ENCODE measurements at regions of chr17 and their contacts with region 1.

Region 1: DNA sequence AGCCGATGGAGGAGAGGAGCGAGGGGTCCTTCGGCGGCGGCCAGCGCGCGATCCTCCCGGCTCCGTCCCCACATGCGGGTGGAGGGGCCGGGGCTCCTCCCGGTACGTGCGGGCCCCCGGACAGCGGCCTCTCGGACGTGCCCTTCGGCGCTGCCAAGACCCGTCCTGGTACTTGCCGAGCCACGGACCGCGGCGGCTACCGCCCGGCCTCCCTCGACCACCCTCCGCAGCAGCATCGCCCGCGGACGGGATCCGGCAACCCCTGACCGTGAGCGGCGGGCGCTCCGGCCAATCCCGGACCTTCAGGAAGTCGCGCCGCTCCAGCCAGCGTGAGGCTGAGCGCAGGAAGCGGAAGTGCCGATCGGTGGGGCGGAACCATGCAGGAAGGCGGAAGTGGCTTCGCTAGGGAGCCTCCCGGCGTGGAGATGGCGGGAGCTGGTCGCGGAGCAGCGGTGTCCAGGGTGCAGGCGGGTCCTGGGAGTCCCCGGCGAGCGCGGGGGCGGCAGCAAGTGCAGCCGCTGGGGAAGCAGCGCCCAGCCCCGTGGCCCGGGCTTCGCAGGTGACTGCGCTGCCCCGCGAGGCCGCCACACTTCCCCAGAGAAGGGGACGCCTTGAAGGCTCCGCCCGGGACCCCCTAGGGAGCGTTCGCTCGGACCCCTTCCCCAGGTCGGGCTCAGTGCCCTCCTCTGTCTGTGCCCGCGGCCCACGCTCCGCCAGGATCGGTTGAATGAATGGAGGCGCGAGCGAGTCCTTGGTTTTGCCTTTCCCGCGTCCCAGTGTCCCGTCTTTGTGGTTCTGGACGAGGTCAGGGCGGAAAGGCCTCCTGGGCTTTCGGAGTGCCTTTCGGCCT is at the starts of genes CCDC137 and OXLD1:
- DNase-seq: peak; percentile 83 to 97 (median 92)
- ATAC-seq: peak; percentile 91 to 94 (median 93)
- H3K4me3 ChIP-seq: peak within 1 kb of the TSS; percentile 69 to 83
- H3K4me3 Mint-ChIP-seq: peak within 1 kb of the TSS; percentile 81 to 90 (median 85)
- H3K27ac ChIP-seq: peak within 1 kb of the TSS; percentile 61
- H3K27ac Mint-ChIP-seq: peak within 1 kb of the TSS; percentile 90 to 92
- H3K4me1 ChIP-seq: peaks cover 33 to 62% of the 10 kb centered on the region in 2 experiments
- H3K4me1 Mint-ChIP-seq: peaks cover 38 to 52% (median 41%) of the 10 kb centered on the region in 3 donors
- H3K27me3 ChIP-seq: no peaks in the 10 kb centered on the region
- H3K27me3 Mint-ChIP-seq: no peaks in the 10 kb centered on the region
- total RNA-seq, gene CCDC137: 15.9 to 33.9 (median 30.0) TPM
- total RNA-seq, gene OXLD1: 34.1 to 93.3 (median 68.1) TPM

Region 2: GRCh38 chr17:81508639-81509206 is 157.8 kb before region 1 on chr17:
- CTCF ChIA-PET with region 1: no interaction called
- POLR2A ChIA-PET with region 1: interaction called in 1 of 2 experiments, 13 read pairs
- DNase-seq: no peak
- ATAC-seq: no peak
- H3K4me3 ChIP-seq: peak overlapping the region; percentile 10 to 96
- H3K4me3 Mint-ChIP-seq: peak overlapping the region; percentile 95 to 98 (median 98)
- H3K27ac ChIP-seq: peak overlapping the region; percentile 56
- H3K27ac Mint-ChIP-seq: peak overlapping the region; percentile 93 to 96
- H3K4me1 ChIP-seq: peaks cover 24 to 51% of the 10 kb centered on the region in 2 experiments
- H3K4me1 Mint-ChIP-seq: peaks cover 29 to 44% (median 43%) of the 10 kb centered on the region in 3 donors
- H3K27me3 ChIP-seq: no peaks in the 10 kb centered on the region
- H3K27me3 Mint-ChIP-seq: no peaks in the 10 kb centered on the region

Region 3: DNA sequence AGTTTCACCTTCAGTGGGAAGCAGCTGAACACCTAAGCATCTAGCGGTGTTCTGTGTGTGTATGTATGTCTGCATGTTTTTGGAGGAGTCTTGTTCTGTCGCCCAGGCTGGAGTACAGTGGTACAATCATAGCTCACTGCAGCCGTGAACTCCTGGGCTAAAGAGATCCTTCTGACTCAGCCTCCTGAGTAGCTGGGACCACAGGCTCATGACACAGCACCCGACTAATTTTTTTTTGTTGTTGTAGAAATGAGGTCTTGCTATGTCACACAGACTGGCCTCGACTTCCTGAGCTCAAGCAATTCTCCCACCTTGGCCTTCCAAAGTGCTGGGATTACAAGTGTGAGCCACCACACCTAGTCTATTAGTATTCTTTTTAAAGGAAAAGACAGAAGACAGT is 84.2 kb before region 1 on chr17:
- CTCF ChIA-PET with region 1: interaction called in 1 of 2 experiments, 11 read pairs
- POLR2A ChIA-PET with region 1: no interaction called
- DNase-seq: no peak
- ATAC-seq: no peak
- H3K4me3 ChIP-seq: no peak overlapping the region
- H3K4me3 Mint-ChIP-seq: no peak overlapping the region
- H3K27ac ChIP-seq: no peak overlapping the region
- H3K27ac Mint-ChIP-seq: no peak overlapping the region
- H3K4me1 ChIP-seq: no peaks in the 10 kb centered on the region
- H3K4me1 Mint-ChIP-seq: peaks cover 0 to 20% (median 8%) of the 10 kb centered on the region in 3 donors
- H3K27me3 ChIP-seq: no peaks in the 10 kb centered on the region
- H3K27me3 Mint-ChIP-seq: no peaks in the 10 kb centered on the region

Region 4: GRCh38 chr17:81977211-81978027 is 310.9 kb after region 1 on chr17 and contains the start of gene ASPSCR1:
- CTCF ChIA-PET with region 1: no interaction called
- POLR2A ChIA-PET with region 1: no interaction called
- DNase-seq: peak; percentile 77 to 95 (median 86)
- ATAC-seq: peak; percentile 91 to 96 (median 94)
- H3K4me3 ChIP-seq: peak within 1 kb of the TSS; percentile 72 to 79
- H3K4me3 Mint-ChIP-seq: peak within 1 kb of the TSS; percentile 85 to 96 (median 94)
- H3K27ac ChIP-seq: peak within 1 kb of the TSS; percentile 38
- H3K27ac Mint-ChIP-seq: peak within 1 kb of the TSS; percentile 95 to 96
- H3K4me1 ChIP-seq: peaks cover 19 to 43% of the 10 kb centered on the region in 2 experiments
- H3K4me1 Mint-ChIP-seq: peaks cover 32 to 43% (median 41%) of the 10 kb centered on the region in 3 donors
- H3K27me3 ChIP-seq: peaks cover 0 to 3% of the 10 kb centered on the region in 2 experiments
- H3K27me3 Mint-ChIP-seq: no peaks in the 10 kb centered on the region
- total RNA-seq, gene ASPSCR1: 34.6 to 49.7 (median 44.9) TPM